WTC11 (cell line): ENCODE measurements at regions of chr7 and their contacts with region 1.

Region 1: DNA sequence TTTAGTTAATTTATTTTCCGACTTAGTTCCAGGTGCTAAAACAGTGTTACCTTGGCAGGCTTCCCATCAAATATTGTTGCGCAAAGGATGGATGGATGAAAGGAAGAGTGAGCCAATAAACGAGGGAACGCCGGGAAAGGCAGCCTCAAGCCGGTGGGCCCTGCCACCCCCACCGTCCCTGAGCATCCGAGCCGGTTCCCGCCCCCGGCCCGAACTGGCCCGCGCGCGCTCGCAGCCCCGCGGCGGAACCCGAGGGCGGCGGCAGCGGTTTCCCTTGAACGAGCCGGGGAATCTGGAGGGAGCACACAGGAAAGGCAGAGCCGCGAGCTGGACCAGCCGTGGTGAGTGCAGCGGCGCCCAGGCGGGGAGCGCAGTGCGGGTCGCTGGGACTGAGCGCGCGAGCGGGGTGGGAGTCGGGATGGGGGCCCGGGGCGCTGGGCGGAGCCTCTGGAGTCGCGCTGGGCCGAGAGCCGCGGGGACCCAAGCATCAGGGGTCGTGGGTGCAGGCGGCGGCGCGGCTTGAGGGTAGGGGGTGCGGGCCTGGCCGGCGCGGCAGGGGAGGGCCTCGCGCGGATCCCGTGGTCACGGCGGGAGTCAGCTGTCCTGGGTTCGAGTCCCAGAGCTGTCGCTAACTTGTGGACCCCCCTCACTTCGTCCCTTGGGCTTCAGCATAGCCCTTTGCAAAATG is at the start of gene AGK:
- DNase-seq: peak; percentile 82
- ATAC-seq: peak; percentile 95
- H3K4me3 Mint-ChIP-seq: peak within 1 kb of the TSS; percentile 84
- H3K27ac Mint-ChIP-seq: peak within 1 kb of the TSS; percentile 56
- H3K4me1 Mint-ChIP-seq: peaks cover 28% of the 10 kb centered on the region
- H3K27me3 Mint-ChIP-seq: no peaks in the 10 kb centered on the region
- CTCF ChIP-seq: no peak
- total RNA-seq, gene AGK: 32.2 to 43.0 TPM (median 37.4 TPM) in 3 replicates

Region 2: GRCh38 chr7:141641876-141642275 is 90.6 kb after region 1 on chr7:
- CTCF ChIA-PET with region 1: no interaction called
- POLR2A ChIA-PET with region 1: no interaction called
- DNase-seq: no peak
- ATAC-seq: no peak
- H3K4me3 Mint-ChIP-seq: no peak overlapping the region
- H3K27ac Mint-ChIP-seq: no peak overlapping the region
- H3K4me1 Mint-ChIP-seq: peaks cover 26% of the 10 kb centered on the region
- H3K27me3 Mint-ChIP-seq: no peaks in the 10 kb centered on the region
- CTCF ChIP-seq: no peak

Region 3: DNA sequence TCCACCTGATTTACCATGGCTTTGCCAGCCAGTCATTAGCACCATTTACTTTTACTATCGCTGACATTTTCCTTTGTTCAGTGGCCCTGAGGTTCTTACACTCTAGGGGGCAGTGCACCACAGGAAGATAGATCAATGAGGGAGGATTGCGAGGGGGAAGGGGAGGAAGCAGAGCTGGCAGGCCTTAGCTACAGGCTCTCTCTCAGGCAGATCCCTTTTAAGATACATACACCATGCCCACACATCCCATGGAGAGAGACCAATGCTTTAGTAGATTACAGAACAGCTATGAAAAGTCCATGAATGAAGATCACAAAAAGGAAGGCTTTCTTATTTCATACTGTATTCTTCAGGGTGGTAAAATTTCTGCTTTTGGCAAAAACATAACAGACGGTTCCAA is 103.3 kb after region 1 on chr7:
- CTCF ChIA-PET with region 1: interaction called, 12 read pairs
- POLR2A ChIA-PET with region 1: no interaction called
- DNase-seq: peak; percentile 57
- ATAC-seq: peak; percentile 82
- H3K4me3 Mint-ChIP-seq: no peak overlapping the region
- H3K27ac Mint-ChIP-seq: peak overlapping the region; percentile 48; the same call in 1 of the 2 replicates
- H3K4me1 Mint-ChIP-seq: peaks cover 28% of the 10 kb centered on the region
- H3K27me3 Mint-ChIP-seq: no peaks in the 10 kb centered on the region
- CTCF ChIP-seq: peak; percentile 29; the same call in 1 of the 2 replicates